ENCODE measurements at regions of chr10 and their contacts with region 1.

Region 1: DNA sequence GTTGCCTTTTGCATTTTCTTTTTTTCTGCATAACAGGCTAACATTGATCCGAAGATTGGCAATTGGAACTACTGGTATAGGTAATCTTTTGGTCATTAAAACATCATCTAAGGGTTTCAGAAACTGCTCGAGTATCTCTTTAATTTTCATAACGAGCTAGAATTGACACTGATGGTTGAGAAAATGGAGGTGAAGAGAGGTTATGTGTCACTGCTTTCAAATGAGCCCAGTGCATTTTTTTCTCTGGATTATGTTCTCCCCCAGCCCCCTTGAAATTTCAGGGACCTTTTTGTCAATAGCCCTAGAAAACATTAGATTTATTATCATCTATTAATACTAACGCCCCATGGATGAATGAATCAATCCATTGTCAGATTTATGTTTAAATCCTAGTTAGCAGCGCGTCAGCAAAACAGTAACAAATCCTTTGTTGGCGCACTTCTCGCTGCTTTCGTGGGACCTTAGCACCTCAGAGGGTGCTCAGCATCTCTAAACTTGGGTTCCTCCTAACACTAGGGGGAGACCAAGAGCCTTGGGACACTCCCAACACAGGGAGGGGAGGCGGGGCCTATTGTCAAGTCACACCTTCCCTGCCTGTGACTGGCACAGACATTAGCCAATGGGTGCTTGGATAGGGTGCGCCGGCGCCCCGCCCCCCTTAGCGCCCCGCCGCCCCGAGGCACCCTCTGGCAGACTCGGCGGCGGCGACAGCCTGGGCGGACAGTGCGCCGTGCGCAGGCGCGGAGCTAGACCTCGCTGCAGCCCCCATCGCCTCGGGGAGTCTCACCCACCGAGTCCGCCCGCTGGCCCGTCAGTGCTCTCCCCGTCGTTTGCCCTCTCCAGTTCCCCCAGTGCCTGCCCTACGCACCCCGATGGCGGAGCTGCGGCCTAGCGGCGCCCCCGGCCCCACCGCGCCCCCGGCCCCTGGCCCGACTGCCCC is at the start of gene SUFU:
- DNase-seq: peak; percentile 88
- ATAC-seq: peak; percentile 74
- H3K4me3 Mint-ChIP-seq: no peak within 1 kb of the TSS
- H3K27ac Mint-ChIP-seq: peak within 1 kb of the TSS; percentile 68
- H3K4me1 Mint-ChIP-seq: peaks cover 23% of the 10 kb centered on the region
- H3K27me3 Mint-ChIP-seq: no peaks in the 10 kb centered on the region
- CTCF ChIP-seq: no peak
- total RNA-seq, gene SUFU: 5.7 and 7.4 TPM in 2 replicates

Region 2: DNA sequence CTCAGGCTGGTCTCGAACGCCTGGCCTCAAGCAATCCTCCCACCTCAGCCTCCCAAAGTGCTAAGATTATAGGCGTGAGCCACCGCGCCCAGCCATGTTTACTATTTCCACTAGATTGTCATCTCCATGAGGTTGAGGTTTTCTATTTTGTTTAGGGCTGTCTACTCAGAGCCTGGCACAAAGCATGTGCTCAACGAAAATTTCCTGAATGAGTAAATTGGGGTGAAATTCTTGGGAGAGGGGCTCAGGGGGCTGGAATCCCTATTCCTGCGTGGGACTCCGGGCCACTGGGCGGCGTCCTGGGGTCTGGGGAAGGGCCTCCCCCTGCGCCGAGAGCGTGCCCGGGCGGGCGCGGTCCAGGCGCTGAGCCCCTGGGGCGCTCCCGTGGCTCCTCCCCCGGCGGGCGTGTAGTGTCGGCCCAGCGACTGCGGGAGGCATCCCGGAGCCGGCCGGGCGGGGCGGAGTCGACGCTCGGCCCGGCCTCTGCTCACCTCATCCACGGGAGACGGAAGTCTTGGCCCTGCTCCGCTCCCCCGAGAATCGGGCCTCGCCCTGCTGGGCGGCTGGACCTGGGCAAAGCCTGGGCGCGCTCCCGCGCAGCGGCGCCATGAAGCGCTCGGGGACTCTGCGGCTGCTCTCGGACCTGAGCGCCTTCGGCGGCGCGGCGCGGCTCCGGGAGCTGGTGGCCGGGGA is 438.5 kb before region 1 on chr10 and contains the start of gene HPS6:
- CTCF ChIA-PET with region 1: no interaction called
- POLR2A ChIA-PET with region 1: no interaction called
- intact Hi-C with region 1: loop called (anchors 2 kb)
- DNase-seq: peak; percentile 88
- ATAC-seq: peak; percentile 97
- H3K4me3 Mint-ChIP-seq: peak within 1 kb of the TSS; percentile 89
- H3K27ac Mint-ChIP-seq: peak within 1 kb of the TSS; percentile 90
- H3K4me1 Mint-ChIP-seq: peaks cover 24% of the 10 kb centered on the region
- H3K27me3 Mint-ChIP-seq: no peaks in the 10 kb centered on the region
- CTCF ChIP-seq: no peak
- total RNA-seq, gene HPS6: 22.8 and 23.0 TPM in 2 replicates

Region 3: DNA sequence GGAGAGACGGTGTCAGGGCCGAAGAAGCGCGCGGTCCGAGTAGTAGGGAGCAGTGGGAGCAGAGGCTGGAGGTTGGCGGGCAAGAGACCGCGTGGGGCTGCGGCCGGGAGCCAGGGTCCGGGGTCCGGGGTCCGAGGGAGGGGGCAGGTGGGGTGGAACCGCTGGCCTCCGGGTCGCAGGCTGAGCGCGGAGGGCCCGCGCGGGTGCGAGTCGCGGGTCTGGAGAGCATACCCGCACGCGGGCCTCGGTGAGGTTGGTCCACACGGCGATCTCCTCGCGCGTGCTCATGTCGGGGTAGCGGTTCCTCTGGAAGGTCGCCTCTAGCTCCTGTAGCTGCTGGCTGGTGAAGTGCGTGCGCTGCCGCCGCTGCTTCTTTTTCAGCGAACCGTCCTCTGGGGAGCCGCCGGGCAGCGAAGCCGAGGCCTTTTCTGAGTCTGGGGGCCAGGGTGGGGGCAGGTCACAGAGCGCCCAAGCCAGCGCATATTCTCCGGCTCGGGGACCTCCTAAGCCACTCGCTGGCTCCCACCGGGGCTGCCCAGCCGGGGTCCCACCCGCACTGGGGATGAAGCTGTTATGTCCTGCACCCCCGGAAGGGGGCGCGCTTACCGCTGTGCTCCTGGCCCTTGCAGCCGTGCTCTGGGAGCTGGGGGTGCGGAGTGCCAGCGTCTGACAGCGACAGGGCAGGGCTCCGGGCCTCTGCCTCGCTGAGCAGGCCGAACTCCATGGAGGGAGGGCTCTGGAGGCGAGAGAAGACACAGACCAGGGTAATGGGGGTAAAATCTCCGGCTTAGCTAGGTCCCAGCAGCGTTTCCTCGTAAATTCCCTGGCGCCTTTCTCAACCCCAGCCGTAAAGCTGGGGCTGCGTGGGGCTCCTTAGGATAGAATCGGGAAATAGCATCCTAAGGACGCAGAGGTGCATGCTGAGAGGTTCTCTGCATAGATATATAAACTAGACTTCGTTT is 271.9 kb before region 1 on chr10:
- CTCF ChIA-PET with region 1: no interaction called
- POLR2A ChIA-PET with region 1: interaction called, 6 read pairs
- intact Hi-C with region 1: loop called (anchors 1 kb)
- DNase-seq: peak; percentile 68
- ATAC-seq: peak; percentile 65
- H3K4me3 Mint-ChIP-seq: peak overlapping the region; percentile 82
- H3K27ac Mint-ChIP-seq: no peak overlapping the region
- H3K4me1 Mint-ChIP-seq: peaks cover 14% of the 10 kb centered on the region
- H3K27me3 Mint-ChIP-seq: peaks cover 57% of the 10 kb centered on the region
- CTCF ChIP-seq: no peak

Region 4: GRCh38 chr10:102432162-102432950 is 71.2 kb before region 1 on chr10 and contains the start of gene CUEDC2:
- CTCF ChIA-PET with region 1: no interaction called
- POLR2A ChIA-PET with region 1: interaction called, 10 read pairs
- intact Hi-C with region 1: no loop called
- DNase-seq: peak; percentile 96
- ATAC-seq: peak; percentile 98
- H3K4me3 Mint-ChIP-seq: peak within 1 kb of the TSS; percentile 93
- H3K27ac Mint-ChIP-seq: peak within 1 kb of the TSS; percentile 75
- H3K4me1 Mint-ChIP-seq: peaks cover 45% of the 10 kb centered on the region
- H3K27me3 Mint-ChIP-seq: no peaks in the 10 kb centered on the region
- CTCF ChIP-seq: no peak
- total RNA-seq, gene CUEDC2: 43.7 and 46.0 TPM in 2 replicates

Region 5: DNA sequence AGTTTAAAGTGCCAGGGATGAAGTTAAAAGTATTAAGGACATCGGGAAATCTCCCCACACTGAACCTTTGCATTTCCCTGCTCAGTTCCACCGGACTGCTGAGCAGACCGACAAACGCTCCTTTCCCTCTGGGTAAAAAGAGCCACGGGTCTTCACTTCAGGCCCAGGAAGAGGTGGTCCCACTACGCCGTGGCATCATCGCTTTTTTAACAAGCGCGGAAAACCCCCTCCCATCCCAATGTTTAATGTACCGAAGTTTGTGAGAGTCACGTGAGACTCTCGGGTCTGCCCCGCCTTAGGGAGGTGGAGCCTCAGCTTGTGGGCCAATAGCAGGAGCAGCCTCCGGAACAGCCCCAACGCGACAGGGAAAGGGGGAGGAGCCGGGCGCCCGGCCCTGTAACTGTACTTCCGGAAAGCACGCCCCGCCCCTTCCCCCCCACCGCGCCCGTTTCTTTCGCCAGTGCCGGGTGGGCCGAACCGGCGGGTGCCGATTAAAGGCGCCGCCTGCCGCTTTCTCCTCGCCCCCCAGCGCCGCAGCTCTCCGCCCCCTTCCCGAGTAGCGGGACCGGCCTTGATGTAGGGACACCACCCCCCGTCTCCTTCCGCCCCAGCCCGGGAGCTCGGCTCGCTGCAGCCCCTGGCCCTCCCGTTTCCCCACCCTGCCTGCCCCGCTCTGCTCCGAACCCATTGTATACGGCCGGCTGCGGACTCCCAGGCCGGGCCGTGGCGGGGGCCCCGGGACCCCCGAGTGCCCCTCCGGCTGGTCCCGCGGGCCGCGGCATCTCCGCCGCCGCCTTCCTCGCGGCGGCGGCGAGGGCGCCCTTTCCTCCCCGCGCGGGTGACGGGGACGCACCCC is 138.6 kb after region 1 on chr10:
- CTCF ChIA-PET with region 1: interaction called, 4 read pairs
- POLR2A ChIA-PET with region 1: interaction called, 10 read pairs
- intact Hi-C with region 1: loop called (anchors 1 kb)
- DNase-seq: peak; percentile 88
- ATAC-seq: peak; percentile 65
- H3K4me3 Mint-ChIP-seq: peak overlapping the region; percentile 88
- H3K27ac Mint-ChIP-seq: peak overlapping the region; percentile 96
- H3K4me1 Mint-ChIP-seq: peaks cover 27% of the 10 kb centered on the region
- H3K27me3 Mint-ChIP-seq: no peaks in the 10 kb centered on the region
- CTCF ChIP-seq: no peak

Region 6: DNA sequence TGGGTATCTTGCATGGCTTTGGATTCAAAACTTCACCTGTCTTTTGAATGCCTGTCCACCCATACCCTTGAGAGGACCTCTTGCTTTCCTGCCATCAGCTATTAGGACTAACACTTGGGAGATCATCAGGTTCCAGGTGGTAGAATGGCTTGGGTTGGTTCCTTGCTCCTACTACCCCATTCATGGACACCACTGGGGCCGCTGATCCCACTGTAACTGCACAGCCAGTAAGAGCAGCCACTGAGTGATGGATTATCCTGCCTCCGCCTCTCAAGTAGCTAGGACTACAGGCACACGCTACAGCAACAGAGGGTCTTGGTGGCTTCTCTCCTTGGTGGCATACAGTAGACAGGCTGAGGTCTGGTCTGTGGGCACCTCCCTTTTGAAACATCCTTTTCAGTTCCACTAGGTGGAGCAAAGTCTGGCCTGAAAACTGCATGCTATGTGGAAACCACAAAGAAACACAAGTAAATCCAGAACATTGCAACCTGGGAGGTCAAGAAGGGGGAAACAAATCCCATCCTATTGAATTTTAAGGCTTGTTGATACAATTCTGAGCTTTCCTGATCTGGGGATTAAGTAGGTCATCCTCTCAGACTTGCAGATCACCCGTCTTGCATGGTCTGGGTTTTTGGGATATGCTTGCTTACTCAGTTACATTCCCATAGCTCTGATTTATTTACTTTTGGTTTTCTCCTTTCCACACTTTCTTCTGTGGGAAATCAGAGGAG is 249.5 kb after region 1 on chr10:
- CTCF ChIA-PET with region 1: no interaction called
- POLR2A ChIA-PET with region 1: no interaction called
- intact Hi-C with region 1: no loop called
- DNase-seq: no peak
- ATAC-seq: peak; percentile 67
- H3K4me3 Mint-ChIP-seq: no peak overlapping the region
- H3K27ac Mint-ChIP-seq: no peak overlapping the region
- H3K4me1 Mint-ChIP-seq: peaks cover 49% of the 10 kb centered on the region
- H3K27me3 Mint-ChIP-seq: no peaks in the 10 kb centered on the region
- CTCF ChIP-seq: no peak

Region 7: DNA sequence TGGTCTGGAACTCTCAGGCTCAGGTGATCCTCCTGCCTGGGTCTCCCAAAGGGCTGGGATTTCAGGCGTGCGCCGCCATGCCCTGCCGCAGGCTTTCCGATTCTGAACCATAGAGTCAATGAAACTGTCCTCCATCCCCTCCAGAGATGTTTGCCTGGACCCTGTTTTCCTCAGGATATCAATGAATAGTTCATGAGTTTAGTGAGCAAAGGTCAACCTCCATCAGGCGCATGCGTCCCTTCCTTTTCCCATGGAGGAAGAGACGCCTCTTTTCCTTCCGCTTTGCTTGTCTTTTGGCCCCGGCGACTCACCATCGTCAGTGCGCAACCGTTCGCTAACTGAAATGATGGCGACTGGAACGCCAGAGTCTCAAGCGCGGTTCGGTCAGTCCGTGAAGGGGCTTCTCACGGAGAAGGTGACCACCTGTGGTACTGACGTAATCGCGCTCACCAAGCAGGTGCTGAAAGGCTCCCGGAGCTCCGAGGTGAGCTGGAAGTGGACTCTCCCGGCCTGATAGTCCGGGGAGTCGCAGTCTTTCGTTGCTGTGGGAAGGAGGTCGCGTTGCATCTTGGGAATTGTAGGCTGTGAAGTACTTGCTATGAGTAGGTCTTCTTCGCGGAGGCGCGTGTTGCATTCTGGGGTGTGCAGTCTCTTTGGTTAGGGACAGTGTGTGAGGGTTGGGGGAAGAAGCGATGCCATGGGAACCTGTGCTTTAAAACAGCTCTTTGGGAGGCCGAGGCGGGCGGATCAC is 350.6 kb after region 1 on chr10 and contains the start of gene BORCS7:
- CTCF ChIA-PET with region 1: no interaction called
- POLR2A ChIA-PET with region 1: no interaction called
- intact Hi-C with region 1: loop called (anchors 5 kb)
- DNase-seq: peak; percentile 72
- ATAC-seq: peak; percentile 99
- H3K4me3 Mint-ChIP-seq: peak within 1 kb of the TSS; percentile 97
- H3K27ac Mint-ChIP-seq: peak within 1 kb of the TSS; percentile 98
- H3K4me1 Mint-ChIP-seq: peaks cover 19% of the 10 kb centered on the region
- H3K27me3 Mint-ChIP-seq: no peaks in the 10 kb centered on the region
- CTCF ChIP-seq: no peak
- total RNA-seq, gene BORCS7: 12.1 and 17.4 TPM in 2 replicates

Measured in activated B cell treated with CpG ODN at 0.5 μM for 24 hours (primary cell).